Activated T-helper 1 cell treated with anti-CD3 and anti-CD28 coated beads, Interleukin-12 subunit alpha, Interleukin-12 subunit beta, Interleukin-2, Interleukin-4 antibody, amounts not matched to agents 30 ng/mL and 10 ng/mL and 1 ng/mL, durations not matched to agents 14 hours and 24 hours and 36 hours (primary cell): ENCODE measurements at regions of chr6 and their contacts with region 1.

Region 1: DNA sequence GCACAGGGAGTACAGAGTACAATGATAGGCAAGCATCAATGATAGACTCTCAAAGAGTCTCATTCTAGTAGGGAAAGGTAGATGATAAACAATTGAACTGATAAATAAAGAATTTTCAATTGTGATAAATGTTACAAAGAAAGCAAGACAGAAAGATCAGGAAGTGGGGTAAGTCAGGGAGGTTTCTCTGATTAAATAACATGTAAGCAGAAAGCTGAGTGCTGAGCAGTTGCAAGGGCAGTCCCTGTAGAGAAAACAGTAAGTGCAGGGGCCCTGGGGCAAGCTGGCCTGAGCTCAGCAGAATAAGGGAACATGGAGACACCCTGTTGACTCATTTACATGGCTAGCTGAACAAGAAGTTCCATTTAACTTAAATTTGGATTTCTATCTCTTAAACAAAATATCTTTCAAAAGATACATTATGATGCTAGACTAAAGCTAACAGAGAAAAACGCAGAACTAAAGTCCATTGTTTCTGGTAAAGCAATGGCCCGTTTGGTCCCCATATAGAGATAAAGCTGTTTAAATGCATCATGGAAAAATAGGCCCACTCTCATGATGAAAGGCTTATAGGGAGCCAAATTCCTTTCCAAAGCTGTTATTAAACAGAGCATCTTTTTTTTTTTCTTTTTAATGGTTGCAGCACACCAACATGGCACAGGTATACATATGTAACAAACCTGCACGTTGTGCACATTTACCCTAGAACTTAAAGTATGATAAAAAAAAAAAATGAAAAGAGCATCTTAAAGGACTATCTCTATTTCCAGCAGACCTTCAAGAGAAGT is 5.3 kb upstream of the TNFAIP3 start:
- DNase-seq: no peak
- H3K4me3 Mint-ChIP-seq: no peak overlapping the region
- H3K27ac Mint-ChIP-seq: no peak overlapping the region
- H3K4me1 Mint-ChIP-seq: peaks cover 47% of the 10 kb centered on the region
- H3K27me3 Mint-ChIP-seq: no peaks in the 10 kb centered on the region

Region 2: GRCh38 chr6:137836788-137837187 is 25.0 kb before region 1 on chr6:
- intact Hi-C with region 1: loop called (anchors 2 kb)
- DNase-seq: no peak
- H3K4me3 Mint-ChIP-seq: no peak overlapping the region
- H3K27ac Mint-ChIP-seq: no peak overlapping the region
- H3K4me1 Mint-ChIP-seq: peaks cover 22% of the 10 kb centered on the region
- H3K27me3 Mint-ChIP-seq: peaks cover 4% of the 10 kb centered on the region